IMR-90 (cell line): ENCODE measurements at regions of chr7 and their contacts with region 1.

Region 1: GRCh38 chr7:116997970-116998369 is 44.7 kb downstream of the ST7 start:
- DNase-seq: no peak
- ATAC-seq: no peak
- H3K4me3 ChIP-seq: no peak overlapping the region
- H3K27ac ChIP-seq: no peak overlapping the region
- H3K4me1 ChIP-seq: peaks cover 5% of the 10 kb centered on the region; the same call in 1 of the 2 replicates
- H3K27me3 ChIP-seq: no peaks in the 10 kb centered on the region
- CTCF ChIP-seq: no peak
- POLR2A ChIP-seq: no peak
- RAD21 ChIP-seq: no peak

Region 2: DNA sequence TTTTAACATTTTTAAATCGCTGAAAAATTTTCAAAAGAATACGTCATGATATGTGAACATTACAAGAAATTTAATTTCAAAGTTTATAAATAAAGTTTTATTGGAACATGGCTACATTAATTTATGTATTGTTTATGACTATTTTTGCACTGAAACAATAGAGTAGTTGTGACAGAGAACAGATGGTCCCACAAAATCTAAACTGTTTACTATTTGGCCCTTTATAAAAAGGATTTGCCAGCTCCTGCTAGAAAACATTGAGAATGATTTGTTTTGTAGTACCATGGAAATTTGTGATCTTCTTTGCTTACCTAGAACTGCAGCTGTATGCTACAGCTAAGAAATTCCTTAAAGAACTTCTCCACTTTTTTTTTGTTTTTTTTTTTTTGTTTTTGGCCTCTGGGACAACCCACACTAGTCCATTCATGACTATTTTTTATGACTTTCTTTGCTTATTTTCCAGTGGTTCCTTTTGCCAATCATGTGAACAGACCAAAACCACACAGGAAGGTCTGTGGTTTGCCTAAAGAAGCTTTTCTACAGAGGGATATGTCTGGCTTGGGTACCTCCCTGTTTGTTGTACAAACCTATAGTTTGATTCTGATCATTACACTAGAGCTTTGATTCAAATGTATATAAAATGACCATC is 11.0 kb after region 1 on chr7:
- CTCF ChIA-PET with region 1: interaction called, 3 read pairs
- POLR2A ChIA-PET with region 1: interaction called, 26 read pairs
- dilution Hi-C with region 1: no loop called
- in situ Hi-C with region 1: no loop called
- intact Hi-C with region 1: no loop called
- DNase-seq: peak; percentile 69
- ATAC-seq: no peak
- H3K4me3 ChIP-seq: no peak overlapping the region
- H3K27ac ChIP-seq: no peak overlapping the region
- H3K4me1 ChIP-seq: peaks cover 4% of the 10 kb centered on the region; the same call in 1 of the 2 replicates
- H3K27me3 ChIP-seq: no peaks in the 10 kb centered on the region
- CTCF ChIP-seq: no peak
- POLR2A ChIP-seq: no peak
- RAD21 ChIP-seq: no peak

Region 3: DNA sequence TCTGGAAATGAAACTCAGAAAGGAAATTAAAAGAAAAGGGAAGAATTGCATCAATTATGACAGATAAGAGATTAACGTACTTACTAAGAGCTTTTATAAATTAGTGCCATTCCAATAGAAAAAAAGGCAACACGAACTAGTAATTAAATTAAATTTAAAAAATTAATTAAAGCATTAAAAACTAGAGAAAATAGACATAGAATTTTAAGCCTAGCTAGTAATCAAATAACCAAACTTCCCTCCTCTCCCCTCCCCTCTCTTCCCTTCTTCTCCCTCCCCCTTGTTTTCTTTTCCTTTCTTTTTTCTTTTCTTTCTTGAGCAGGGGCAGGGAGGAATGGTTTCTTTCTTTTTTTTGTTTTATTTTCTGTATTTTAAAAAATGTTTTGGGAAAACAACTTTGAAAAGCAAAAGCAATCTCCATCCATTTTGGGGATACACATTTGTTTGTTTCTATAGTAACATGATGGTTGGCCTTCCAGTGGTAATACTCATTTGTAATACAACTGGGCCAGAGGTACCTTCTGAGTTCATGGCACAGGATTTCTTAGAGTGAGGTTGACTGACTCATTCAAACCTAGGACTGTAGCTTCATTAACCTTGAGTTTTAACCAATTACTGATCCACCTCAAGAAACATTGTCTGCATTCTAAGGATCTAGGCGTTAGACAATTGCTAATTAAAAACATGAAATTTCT is 87.9 kb after region 1 on chr7:
- CTCF ChIA-PET with region 1: no interaction called
- POLR2A ChIA-PET with region 1: no interaction called
- dilution Hi-C with region 1: no loop called
- in situ Hi-C with region 1: no loop called
- intact Hi-C with region 1: no loop called
- DNase-seq: peak; percentile 54
- ATAC-seq: no peak
- H3K4me3 ChIP-seq: no peak overlapping the region
- H3K27ac ChIP-seq: no peak overlapping the region
- H3K4me1 ChIP-seq: peaks cover 5% of the 10 kb centered on the region; the same call in 1 of the 2 replicates
- H3K27me3 ChIP-seq: no peaks in the 10 kb centered on the region
- CTCF ChIP-seq: no peak
- POLR2A ChIP-seq: no peak
- RAD21 ChIP-seq: no peak